ENCODE measurements at regions of chr1 and their contacts with region 1.

Region 1: DNA sequence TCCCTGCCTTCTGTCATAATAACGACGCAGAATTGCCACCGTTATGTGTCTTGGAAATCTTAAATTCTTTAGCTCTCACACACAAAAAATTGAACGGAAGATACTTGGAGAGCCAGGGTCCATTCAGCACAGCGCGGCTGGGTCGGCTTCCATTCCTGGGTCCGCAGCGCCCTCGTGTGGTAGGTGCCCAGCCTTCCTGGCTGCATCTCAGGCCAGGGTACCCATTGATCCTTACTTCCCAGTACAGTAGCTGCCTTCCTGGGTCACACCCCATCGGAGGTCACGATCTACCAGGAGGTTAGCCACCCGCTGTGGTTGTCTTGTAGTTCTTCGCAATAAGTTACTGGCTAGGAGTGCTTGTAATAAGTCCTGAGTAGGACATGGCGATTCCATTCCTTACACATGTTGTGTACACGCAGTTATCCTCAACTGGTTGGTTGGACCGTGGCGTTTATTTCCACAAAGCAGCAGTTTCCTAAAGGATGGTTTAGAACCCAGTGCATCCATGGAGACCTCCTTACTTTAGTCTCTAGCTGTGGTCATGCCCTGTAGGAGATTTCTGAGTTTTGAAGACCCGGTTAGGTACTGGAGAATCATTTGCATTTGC is 9.9 kb upstream of the MTARC1 start:
- DNase-seq: peak; percentile 90
- ATAC-seq: peak; percentile 99
- H3K4me3 Mint-ChIP-seq: no peak overlapping the region
- H3K27ac Mint-ChIP-seq: no peak overlapping the region
- H3K4me1 Mint-ChIP-seq: peaks cover 14% of the 10 kb centered on the region
- H3K27me3 Mint-ChIP-seq: no peaks in the 10 kb centered on the region
- CTCF ChIP-seq: peak; percentile 86

Region 2: DNA sequence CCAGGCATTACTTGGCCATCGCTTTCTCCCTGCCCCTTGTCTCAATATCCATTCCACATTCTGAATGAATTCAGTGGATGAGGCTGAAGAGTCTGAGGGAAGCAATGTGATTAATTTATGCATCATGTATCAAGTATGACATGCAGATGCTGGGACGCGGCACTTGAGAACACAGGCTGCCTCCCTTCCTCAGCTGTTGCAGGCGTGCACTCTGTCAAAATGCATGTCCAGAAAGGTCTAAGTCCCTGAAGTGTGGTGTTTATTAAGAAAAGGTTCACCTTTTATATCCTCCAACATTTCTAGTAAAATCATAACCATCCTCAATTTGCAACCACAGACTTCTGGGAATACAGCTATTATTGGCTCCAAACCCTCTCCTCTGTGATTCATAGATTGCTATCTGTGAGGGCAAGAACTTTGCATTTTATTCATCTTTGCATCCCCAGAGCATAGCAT is 481.9 kb before region 1 on chr1:
- CTCF ChIA-PET with region 1: interaction called, 11 read pairs
- POLR2A ChIA-PET with region 1: no interaction called
- DNase-seq: no peak
- ATAC-seq: no peak
- H3K4me3 Mint-ChIP-seq: no peak overlapping the region
- H3K27ac Mint-ChIP-seq: no peak overlapping the region
- H3K4me1 Mint-ChIP-seq: peaks cover 37% of the 10 kb centered on the region
- H3K27me3 Mint-ChIP-seq: no peaks in the 10 kb centered on the region
- CTCF ChIP-seq: no peak

Region 3: DNA sequence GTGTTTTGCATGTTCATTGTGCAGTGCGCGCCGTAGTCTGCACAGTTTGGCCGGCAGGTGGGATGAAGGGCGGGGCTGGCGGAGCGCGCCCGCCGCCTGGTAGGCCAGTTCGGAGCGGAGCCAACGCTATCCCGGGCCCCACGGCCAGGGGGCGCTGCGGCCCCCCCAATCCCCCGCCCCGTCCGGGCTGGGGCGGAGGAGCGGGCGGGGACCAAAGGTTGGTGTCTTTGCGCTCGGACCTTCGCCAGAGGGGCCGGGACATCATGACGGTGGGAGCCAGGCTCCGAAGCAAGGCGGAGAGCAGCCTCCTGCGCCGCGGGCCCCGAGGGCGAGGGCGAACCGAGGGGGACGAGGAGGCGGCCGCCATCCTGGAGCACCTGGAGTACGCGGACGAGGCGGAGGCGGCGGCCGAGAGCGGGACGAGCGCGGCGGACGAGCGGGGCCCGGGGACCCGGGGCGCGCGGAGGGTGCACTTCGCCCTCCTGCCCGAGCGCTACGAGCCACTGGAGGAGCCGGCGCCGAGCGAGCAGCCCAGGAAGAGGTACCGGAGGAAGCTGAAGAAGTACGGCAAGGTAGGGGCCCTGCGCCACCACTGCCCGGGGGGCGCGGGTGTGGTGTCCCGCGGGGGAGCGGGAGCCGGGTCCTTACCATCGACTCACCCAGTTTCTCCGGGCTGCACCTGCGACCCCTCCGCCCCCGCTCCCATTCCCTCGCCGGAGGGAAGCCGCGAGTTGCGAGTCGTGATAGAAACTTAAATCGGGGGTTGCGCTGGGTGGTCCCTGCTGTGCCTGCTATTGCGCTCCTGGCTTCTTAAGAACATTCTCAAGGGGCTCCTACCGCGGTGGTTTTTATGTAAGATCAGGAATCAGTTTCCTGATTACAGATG is 86.4 kb before region 1 on chr1 and contains the start of gene C1orf115:
- CTCF ChIA-PET with region 1: interaction called, 20 read pairs
- POLR2A ChIA-PET with region 1: no interaction called
- DNase-seq: peak; percentile 89
- ATAC-seq: peak; percentile 90
- H3K4me3 Mint-ChIP-seq: peak within 1 kb of the TSS; percentile 93
- H3K27ac Mint-ChIP-seq: 0 out of 2 replicates have a peak within 1 kb of the TSS, but pooled peaks have one; percentile 60
- H3K4me1 Mint-ChIP-seq: peaks cover 15% of the 10 kb centered on the region
- H3K27me3 Mint-ChIP-seq: peaks cover 28% of the 10 kb centered on the region
- CTCF ChIP-seq: peak; percentile 99
- total RNA-seq, gene C1orf115: 10.0 to 11.5 TPM (median 11.1 TPM) in 3 replicates

Region 4: DNA sequence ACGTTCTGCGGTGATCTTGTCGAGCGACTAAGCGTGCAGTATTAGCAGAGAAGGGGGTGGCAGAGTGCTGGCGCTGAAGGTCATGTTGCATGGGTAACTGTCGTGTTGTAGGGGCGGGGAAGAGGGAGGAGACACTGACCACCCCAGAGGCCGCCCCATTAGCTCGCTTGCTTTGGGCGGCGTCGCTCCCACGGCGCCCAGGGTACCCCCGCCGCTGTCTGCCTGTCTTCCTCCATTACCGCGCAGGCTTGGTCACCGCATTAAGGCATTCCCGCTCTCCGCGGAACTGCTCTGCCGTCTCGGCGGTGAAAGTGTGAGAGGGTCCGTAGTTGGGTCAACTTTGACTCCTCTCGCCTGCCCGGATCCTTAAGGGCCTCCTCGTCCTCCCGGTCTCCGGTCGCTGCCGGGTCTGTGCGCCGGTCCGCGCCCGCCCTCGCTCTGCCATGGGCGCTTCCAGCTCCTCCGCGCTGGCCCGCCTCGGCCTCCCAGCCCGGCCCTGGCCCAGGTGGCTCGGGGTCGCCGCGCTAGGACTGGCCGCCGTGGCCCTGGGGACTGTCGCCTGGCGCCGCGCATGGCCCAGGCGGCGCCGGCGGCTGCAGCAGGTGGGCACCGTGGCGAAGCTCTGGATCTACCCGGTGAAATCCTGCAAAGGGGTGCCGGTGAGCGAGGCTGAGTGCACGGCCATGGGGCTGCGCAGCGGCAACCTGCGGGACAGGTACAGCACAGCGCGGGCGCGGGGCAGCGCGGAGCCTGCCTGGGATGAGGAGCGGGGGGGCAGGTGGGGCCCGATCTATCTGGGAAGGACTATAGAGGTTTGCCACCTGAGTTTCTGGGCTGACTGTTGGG is 28.5 kb before region 1 on chr1 and contains the start of gene MTARC2:
- CTCF ChIA-PET with region 1: interaction called, 24 read pairs
- POLR2A ChIA-PET with region 1: no interaction called
- DNase-seq: peak; percentile 81
- ATAC-seq: peak; percentile 92
- H3K4me3 Mint-ChIP-seq: peak within 1 kb of the TSS; percentile 88
- H3K27ac Mint-ChIP-seq: peak within 1 kb of the TSS; percentile 91
- H3K4me1 Mint-ChIP-seq: peaks cover 49% of the 10 kb centered on the region
- H3K27me3 Mint-ChIP-seq: peaks cover 43% of the 10 kb centered on the region
- CTCF ChIP-seq: no peak
- total RNA-seq, gene MTARC2: 12.5 to 15.5 TPM (median 15.2 TPM) in 3 replicates

Measured in WTC11 (cell line).